ENCODE measurements at regions of chr5 and their contacts with region 1.

Region 1: GRCh38 chr5:180494060-180494509 is at the start of gene CNOT6:
- DNase-seq: peak; percentile 93
- ATAC-seq: peak; percentile 97
- H3K4me3 ChIP-seq: peak within 1 kb of the TSS; percentile 90
- H3K27ac ChIP-seq: peak within 1 kb of the TSS; percentile 84
- H3K4me1 ChIP-seq: peaks cover 6% of the 10 kb centered on the region
- H3K27me3 ChIP-seq: no peaks in the 10 kb centered on the region
- CTCF ChIP-seq: no peak
- POLR2A ChIP-seq: 0 out of 2 replicates have a peak, but pooled peaks have one; percentile 44
- RAD21 ChIP-seq: no peak
- total RNA-seq, gene CNOT6: 10.8 and 14.2 TPM in 2 replicates

Region 2: DNA sequence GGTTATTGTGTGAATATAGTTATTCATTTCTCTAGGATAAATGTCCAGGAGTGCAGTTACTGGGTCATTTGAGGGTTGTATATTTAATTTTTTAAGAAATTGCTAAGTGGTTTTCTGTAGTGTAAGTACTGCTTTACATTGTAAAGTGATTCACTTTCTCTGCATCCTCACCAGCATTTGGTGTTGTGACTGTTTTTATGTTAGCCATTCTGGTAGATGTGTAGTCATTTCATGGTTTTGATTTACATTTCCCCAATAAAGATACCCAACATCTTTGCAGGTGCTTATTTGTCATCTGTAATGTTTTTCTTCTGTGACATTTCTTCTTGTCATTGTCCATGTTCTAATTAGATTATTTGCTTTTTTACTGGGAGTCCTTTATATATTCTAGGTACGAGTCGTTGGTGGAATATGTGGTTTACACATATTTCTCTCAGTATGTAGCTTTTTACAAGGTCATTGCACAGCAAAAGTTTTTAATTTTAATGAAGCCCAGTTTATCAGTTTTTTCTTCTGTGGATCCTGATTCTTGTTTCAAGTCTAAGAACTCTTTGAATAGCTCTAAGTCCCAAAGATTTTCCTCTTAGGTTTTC is 63.2 kb after region 1 on chr5:
- CTCF ChIA-PET with region 1: no interaction called
- POLR2A ChIA-PET with region 1: no interaction called
- dilution Hi-C with region 1: no loop called
- in situ Hi-C with region 1: no loop called
- intact Hi-C with region 1: loop called (anchors 2 kb)
- DNase-seq: peak; percentile 49
- ATAC-seq: 0 out of 2 replicates have a peak, but pooled peaks have one; percentile 16
- H3K4me3 ChIP-seq: no peak overlapping the region
- H3K27ac ChIP-seq: peak overlapping the region; percentile 29; the same call in 1 of the 2 replicates
- H3K4me1 ChIP-seq: peaks cover 19% of the 10 kb centered on the region
- H3K27me3 ChIP-seq: no peaks in the 10 kb centered on the region
- CTCF ChIP-seq: no peak
- POLR2A ChIP-seq: no peak
- RAD21 ChIP-seq: no peak

Region 3: DNA sequence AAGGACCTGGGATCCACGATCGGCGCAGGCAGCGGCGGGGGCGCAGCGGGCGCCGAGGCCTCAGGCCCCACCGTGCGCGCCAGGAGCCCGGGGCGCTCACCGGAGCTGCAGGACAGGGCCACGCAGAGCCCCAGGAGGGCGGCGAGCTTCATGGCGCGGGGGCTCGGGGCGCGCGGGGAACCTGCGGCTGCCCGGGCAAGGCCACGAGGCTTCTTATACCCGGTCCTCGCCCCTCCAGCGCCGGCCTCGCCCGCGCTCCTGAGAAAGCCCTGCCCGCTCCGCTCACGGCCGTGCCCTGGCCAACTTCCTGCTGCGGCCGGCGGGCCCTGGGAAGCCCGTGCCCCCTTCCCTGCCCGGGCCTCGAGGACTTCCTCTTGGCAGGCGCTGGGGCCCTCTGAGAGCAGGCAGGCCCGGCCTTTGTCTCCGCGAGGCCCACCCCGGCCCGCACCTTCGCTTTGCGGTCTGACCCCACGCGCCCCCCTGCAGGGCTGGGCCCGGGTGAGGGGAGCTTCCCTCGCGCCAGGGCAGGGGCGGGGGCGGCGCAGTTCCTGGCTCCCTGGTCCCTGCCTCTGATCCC is 97.3 kb after region 1 on chr5 and contains the start of gene SCGB3A1:
- CTCF ChIA-PET with region 1: no interaction called
- POLR2A ChIA-PET with region 1: no interaction called
- dilution Hi-C with region 1: no loop called
- in situ Hi-C with region 1: no loop called
- intact Hi-C with region 1: no loop called
- DNase-seq: no peak
- ATAC-seq: peak; percentile 45
- H3K4me3 ChIP-seq: no peak within 1 kb of the TSS
- H3K27ac ChIP-seq: no peak within 1 kb of the TSS
- H3K4me1 ChIP-seq: no peaks in the 10 kb centered on the region; the same call in 1 of the 2 replicates
- H3K27me3 ChIP-seq: peaks cover 40% of the 10 kb centered on the region
- CTCF ChIP-seq: no peak
- POLR2A ChIP-seq: no peak
- RAD21 ChIP-seq: no peak
- total RNA-seq, gene SCGB3A1: not detected in 2 replicates

Region 4: GRCh38 chr5:180605554-180606214 is 111.6 kb after region 1 on chr5:
- CTCF ChIA-PET with region 1: no interaction called
- POLR2A ChIA-PET with region 1: no interaction called
- dilution Hi-C with region 1: no loop called
- in situ Hi-C with region 1: no loop called
- intact Hi-C with region 1: loop called (anchors 2 kb)
- DNase-seq: peak; percentile 51
- ATAC-seq: peak; percentile 73
- H3K4me3 ChIP-seq: no peak overlapping the region
- H3K27ac ChIP-seq: no peak overlapping the region
- H3K4me1 ChIP-seq: no peaks in the 10 kb centered on the region
- H3K27me3 ChIP-seq: peaks cover 10% of the 10 kb centered on the region; the same call in 1 of the 2 replicates
- CTCF ChIP-seq: peak; percentile 56
- POLR2A ChIP-seq: no peak
- RAD21 ChIP-seq: peak; percentile 52